Endothelial cell of umbilical vein (primary cell): ENCODE measurements at regions of chr9 and their contacts with region 1.

Region 1: GRCh38 chr9:95167998-95168397 is 149.5 kb downstream of the FANCC start:
- DNase-seq: peak; percentile 82
- H3K4me3 ChIP-seq: no peak overlapping the region
- H3K27ac ChIP-seq: no peak overlapping the region
- H3K4me1 ChIP-seq: peaks cover 16% of the 10 kb centered on the region
- H3K27me3 ChIP-seq: no peaks in the 10 kb centered on the region
- CTCF ChIP-seq: peak; percentile 74 to 82
- POLR2A ChIP-seq: no peak

Region 2: GRCh38 chr9:94672811-94673487 is 495.0 kb before region 1 on chr9:
- CTCF ChIA-PET with region 1: interaction called, 94 read pairs
- POLR2A ChIA-PET with region 1: no interaction called
- dilution Hi-C with region 1: no loop called
- intact Hi-C with region 1: loop called (anchors 1 kb)
- DNase-seq: no peak
- H3K4me3 ChIP-seq: no peak overlapping the region
- H3K27ac ChIP-seq: no peak overlapping the region
- H3K4me1 ChIP-seq: peaks cover 6% of the 10 kb centered on the region
- H3K27me3 ChIP-seq: no peaks in the 10 kb centered on the region
- CTCF ChIP-seq: no peak
- POLR2A ChIP-seq: no peak

Region 3: DNA sequence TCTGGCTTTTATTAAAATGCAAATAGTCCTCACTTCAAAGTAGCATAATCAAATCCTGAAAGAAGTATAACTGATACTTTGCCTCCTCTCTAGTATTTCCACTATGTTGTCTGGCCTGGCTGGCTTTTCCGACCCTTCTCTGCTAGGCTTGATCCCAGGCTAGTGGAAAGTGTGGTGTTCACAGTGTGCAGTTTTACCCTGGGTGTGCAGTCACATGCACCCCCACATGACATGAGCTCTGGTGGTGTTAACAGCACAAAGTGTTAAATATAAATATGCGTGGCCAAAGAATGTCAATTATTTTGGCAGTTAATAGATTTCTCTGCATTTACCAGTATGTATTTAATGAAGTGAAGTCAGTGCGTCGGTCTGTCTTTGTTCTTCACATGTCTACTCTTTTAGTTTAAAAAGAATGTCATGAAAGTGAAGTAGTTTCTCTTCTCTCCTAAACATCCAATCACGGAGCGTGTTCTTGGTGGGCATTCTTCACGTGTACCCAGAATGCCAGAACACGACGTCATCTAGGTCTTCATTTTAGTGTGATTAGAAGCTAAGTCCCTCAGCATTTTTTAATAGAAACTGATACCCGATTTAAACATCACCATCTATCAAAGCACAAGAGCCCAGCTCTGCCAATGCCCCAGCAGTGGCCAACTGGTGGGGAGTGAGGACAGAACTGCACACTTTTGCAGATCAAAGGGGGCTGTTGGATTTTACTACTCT is 136.9 kb before region 1 on chr9:
- CTCF ChIA-PET with region 1: no interaction called
- POLR2A ChIA-PET with region 1: no interaction called
- dilution Hi-C with region 1: no loop called
- intact Hi-C with region 1: no loop called
- DNase-seq: no peak
- H3K4me3 ChIP-seq: no peak overlapping the region
- H3K27ac ChIP-seq: no peak overlapping the region
- H3K4me1 ChIP-seq: peaks cover 3% of the 10 kb centered on the region
- H3K27me3 ChIP-seq: no peaks in the 10 kb centered on the region
- CTCF ChIP-seq: no peak
- POLR2A ChIP-seq: no peak

Region 4: DNA sequence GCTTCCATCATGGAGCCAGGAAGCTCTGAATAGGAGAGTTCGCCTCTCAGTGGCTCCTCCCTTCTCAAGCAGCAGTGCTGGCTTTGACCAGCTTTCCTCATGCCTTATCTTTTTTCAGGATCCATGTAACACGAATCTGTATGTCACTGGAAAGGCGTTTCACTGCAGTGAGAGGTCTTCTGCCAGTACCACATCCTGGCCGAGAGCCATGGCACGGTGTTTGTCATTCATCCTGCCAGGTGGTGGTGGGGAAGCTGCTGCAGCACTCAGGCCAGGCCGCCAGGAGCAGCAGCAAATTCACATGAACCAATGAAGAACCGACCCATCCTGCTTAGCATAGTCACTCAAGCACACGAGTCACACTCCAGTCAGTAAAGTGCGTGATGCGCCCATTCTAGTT is 29.5 kb before region 1 on chr9:
- CTCF ChIA-PET with region 1: interaction called, 12 read pairs
- POLR2A ChIA-PET with region 1: no interaction called
- dilution Hi-C with region 1: no loop called
- intact Hi-C with region 1: no loop called
- DNase-seq: peak; percentile 9
- H3K4me3 ChIP-seq: no peak overlapping the region
- H3K27ac ChIP-seq: no peak overlapping the region
- H3K4me1 ChIP-seq: no peaks in the 10 kb centered on the region
- H3K27me3 ChIP-seq: no peaks in the 10 kb centered on the region
- CTCF ChIP-seq: no peak
- POLR2A ChIP-seq: no peak

Region 5: DNA sequence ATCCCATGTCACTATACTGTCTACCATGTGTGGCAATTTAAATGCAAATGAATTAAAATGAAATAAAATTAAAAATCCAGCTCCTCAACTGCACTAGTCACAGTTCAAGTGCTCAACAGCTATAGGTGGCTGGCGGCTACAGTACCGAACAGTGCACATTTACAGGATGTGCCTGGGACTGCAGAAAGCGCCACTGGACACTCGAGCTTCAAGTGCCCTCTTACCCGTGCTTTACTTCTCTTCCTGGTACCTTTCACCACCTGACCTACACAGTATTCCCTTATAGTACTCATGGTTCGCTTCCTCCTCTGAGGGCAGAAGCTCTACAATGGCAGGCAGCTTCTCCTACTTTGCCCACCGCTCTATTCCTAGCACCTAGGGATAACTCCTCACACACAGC is 17.1 kb before region 1 on chr9:
- CTCF ChIA-PET with region 1: interaction called, 33 read pairs
- POLR2A ChIA-PET with region 1: no interaction called
- dilution Hi-C with region 1: no loop called
- intact Hi-C with region 1: no loop called
- DNase-seq: no peak
- H3K4me3 ChIP-seq: no peak overlapping the region
- H3K27ac ChIP-seq: no peak overlapping the region
- H3K4me1 ChIP-seq: no peaks in the 10 kb centered on the region
- H3K27me3 ChIP-seq: no peaks in the 10 kb centered on the region
- CTCF ChIP-seq: no peak
- POLR2A ChIP-seq: no peak

Region 6: GRCh38 chr9:95181226-95181818 is 13.3 kb after region 1 on chr9:
- CTCF ChIA-PET with region 1: interaction called, 52 read pairs
- POLR2A ChIA-PET with region 1: no interaction called
- dilution Hi-C with region 1: no loop called
- intact Hi-C with region 1: no loop called
- DNase-seq: peak; percentile 38
- H3K4me3 ChIP-seq: no peak overlapping the region
- H3K27ac ChIP-seq: no peak overlapping the region
- H3K4me1 ChIP-seq: no peaks in the 10 kb centered on the region
- H3K27me3 ChIP-seq: no peaks in the 10 kb centered on the region
- CTCF ChIP-seq: peak; percentile 4 to 15
- POLR2A ChIP-seq: no peak

Region 7: GRCh38 chr9:95206143-95206542 is 38.1 kb after region 1 on chr9:
- CTCF ChIA-PET with region 1: interaction called, 11 read pairs
- POLR2A ChIA-PET with region 1: no interaction called
- dilution Hi-C with region 1: no loop called
- intact Hi-C with region 1: no loop called
- DNase-seq: no peak
- H3K4me3 ChIP-seq: no peak overlapping the region
- H3K27ac ChIP-seq: no peak overlapping the region
- H3K4me1 ChIP-seq: no peaks in the 10 kb centered on the region
- H3K27me3 ChIP-seq: no peaks in the 10 kb centered on the region
- CTCF ChIP-seq: no peak
- POLR2A ChIP-seq: no peak

Region 8: DNA sequence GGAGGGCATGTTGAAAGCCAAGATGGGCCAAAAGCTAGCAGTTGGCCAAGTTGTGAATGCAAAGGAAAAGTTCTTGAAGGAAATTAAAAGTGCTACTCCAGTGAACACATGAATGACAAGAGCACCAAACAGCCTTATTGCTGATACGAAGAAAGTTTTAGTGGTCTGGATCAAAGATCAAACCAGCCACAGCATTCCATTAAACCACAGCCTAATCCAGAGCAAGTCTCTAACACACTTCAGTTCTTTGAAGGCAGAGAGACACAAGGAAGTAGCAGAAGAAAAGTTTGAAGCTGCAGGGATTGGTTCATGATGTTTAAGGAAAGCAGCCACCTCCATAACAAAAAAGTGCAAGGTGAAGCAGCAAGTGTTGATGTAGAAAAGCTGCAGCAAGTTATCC is 779.1 kb after region 1 on chr9:
- CTCF ChIA-PET with region 1: no interaction called
- POLR2A ChIA-PET with region 1: no interaction called
- dilution Hi-C with region 1: no loop called
- intact Hi-C with region 1: no loop called
- DNase-seq: no peak
- H3K4me3 ChIP-seq: no peak overlapping the region
- H3K27ac ChIP-seq: no peak overlapping the region
- H3K4me1 ChIP-seq: peaks cover 10% of the 10 kb centered on the region
- H3K27me3 ChIP-seq: no peaks in the 10 kb centered on the region
- CTCF ChIP-seq: no peak
- POLR2A ChIP-seq: no peak